ENCODE measurements at regions of chr1 and their contacts with region 1.

Region 1: GRCh38 chr1:40315239-40315794 is 1.8 kb downstream of the COL9A2 start:
- DNase-seq: peak; percentile 71 to 93 (median 83)
- ATAC-seq: peak; percentile 66 to 83 (median 74)
- H3K4me3 ChIP-seq: peak overlapping the region; percentile 52 to 85
- H3K4me3 Mint-ChIP-seq: peak overlapping the region; percentile 81 to 90 (median 83)
- H3K27ac ChIP-seq: no peak overlapping the region
- H3K27ac Mint-ChIP-seq: peak overlapping the region in 1 of 2 donors; percentile 39
- H3K4me1 ChIP-seq: peaks cover 13 to 46% of the 10 kb centered on the region in 2 experiments
- H3K4me1 Mint-ChIP-seq: peaks cover 33 to 54% (median 40%) of the 10 kb centered on the region in 3 donors
- H3K27me3 ChIP-seq: peaks cover 2 to 33% of the 10 kb centered on the region in 2 experiments
- H3K27me3 Mint-ChIP-seq: peaks cover 9 to 10% of the 10 kb centered on the region in 2 donors

Region 2: DNA sequence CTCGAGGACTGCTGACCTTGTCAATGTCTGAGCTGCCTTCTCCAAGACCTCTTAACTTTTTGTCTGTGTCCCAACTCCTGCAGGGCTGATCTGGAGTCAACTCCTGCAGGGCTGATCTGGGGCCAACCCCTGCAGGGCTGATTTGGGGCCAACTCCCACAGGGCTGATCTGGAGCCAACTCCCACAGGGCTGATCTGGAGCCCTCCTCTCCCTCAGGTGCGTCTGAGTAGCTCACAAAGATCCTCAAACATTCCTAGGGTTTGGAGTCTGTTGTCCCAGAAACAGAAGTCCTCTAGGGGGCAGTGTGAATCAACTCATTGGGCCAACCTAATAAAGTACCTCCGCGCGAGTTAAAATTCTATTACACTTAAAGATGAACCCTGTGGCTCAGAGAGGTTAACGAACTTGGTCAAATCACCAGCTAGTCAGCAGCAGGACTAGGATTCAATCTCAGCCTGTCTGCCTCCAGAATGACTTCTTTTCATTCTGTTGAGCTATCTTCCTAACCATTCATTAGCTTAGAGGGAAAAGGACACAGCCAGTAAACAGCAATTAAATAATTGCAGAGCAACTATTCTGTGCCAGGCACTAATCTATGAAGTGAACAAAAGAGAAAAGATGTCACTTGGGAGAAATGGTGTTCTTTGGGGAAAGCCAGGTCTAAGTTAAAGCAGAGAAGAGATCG is 171.3 kb before region 1 on chr1:
- CTCF ChIA-PET with region 1: no interaction called
- POLR2A ChIA-PET with region 1: interaction called in 1 of 2 experiments, 19 read pairs
- DNase-seq: peak in 34 of 35 experiments; percentile 5 to 83 (median 34)
- ATAC-seq: peak; percentile 69 to 90 (median 78)
- H3K4me3 ChIP-seq: no peak overlapping the region
- H3K4me3 Mint-ChIP-seq: no peak overlapping the region
- H3K27ac ChIP-seq: no peak overlapping the region
- H3K27ac Mint-ChIP-seq: no peak overlapping the region
- H3K4me1 ChIP-seq: peaks cover 0 to 4% of the 10 kb centered on the region in 2 experiments
- H3K4me1 Mint-ChIP-seq: peaks cover 6 to 8% (median 7%) of the 10 kb centered on the region in 3 donors
- H3K27me3 ChIP-seq: peaks cover 3% of the 10 kb centered on the region in 2 experiments
- H3K27me3 Mint-ChIP-seq: peaks cover 25 to 33% of the 10 kb centered on the region in 2 donors

Region 3: GRCh38 chr1:40153073-40153770 is 162.1 kb before region 1 on chr1:
- CTCF ChIA-PET with region 1: interaction called, 3 to 18 read pairs
- POLR2A ChIA-PET with region 1: no interaction called
- DNase-seq: peak in 20 of 35 experiments; percentile 9 to 83 (median 24)
- ATAC-seq: peak; percentile 57 to 81 (median 70)
- H3K4me3 ChIP-seq: no peak overlapping the region
- H3K4me3 Mint-ChIP-seq: peak overlapping the region in 2 of 3 donors; percentile 14 to 23
- H3K27ac ChIP-seq: no peak overlapping the region
- H3K27ac Mint-ChIP-seq: peak overlapping the region; percentile 40 to 82
- H3K4me1 ChIP-seq: no peaks in the 10 kb centered on the region
- H3K4me1 Mint-ChIP-seq: peaks cover 5 to 10% (median 6%) of the 10 kb centered on the region in 3 donors
- H3K27me3 ChIP-seq: no peaks in the 10 kb centered on the region
- H3K27me3 Mint-ChIP-seq: peaks cover 4% of the 10 kb centered on the region in 2 donors

Region 4: GRCh38 chr1:40257688-40258444 is 57.5 kb before region 1 on chr1 and contains the start of gene ZMPSTE24:
- CTCF ChIA-PET with region 1: interaction called in 1 of 2 experiments, 18 read pairs
- POLR2A ChIA-PET with region 1: interaction called in 1 of 2 experiments, 10 read pairs
- DNase-seq: peak; percentile 90 to 98 (median 97)
- ATAC-seq: peak; percentile 96 to 97 (median 97)
- H3K4me3 ChIP-seq: peak within 1 kb of the TSS; percentile 94 to 98
- H3K4me3 Mint-ChIP-seq: peak within 1 kb of the TSS; percentile 94 to 99 (median 98)
- H3K27ac ChIP-seq: peak within 1 kb of the TSS; percentile 100
- H3K27ac Mint-ChIP-seq: peak within 1 kb of the TSS; percentile 100
- H3K4me1 ChIP-seq: peaks cover 13 to 20% of the 10 kb centered on the region in 2 experiments
- H3K4me1 Mint-ChIP-seq: peaks cover 35 to 64% (median 59%) of the 10 kb centered on the region in 3 donors
- H3K27me3 ChIP-seq: no peaks in the 10 kb centered on the region
- H3K27me3 Mint-ChIP-seq: no peaks in the 10 kb centered on the region
- total RNA-seq, gene ZMPSTE24: 12.4 to 16.9 (median 15.2) TPM

Region 5: DNA sequence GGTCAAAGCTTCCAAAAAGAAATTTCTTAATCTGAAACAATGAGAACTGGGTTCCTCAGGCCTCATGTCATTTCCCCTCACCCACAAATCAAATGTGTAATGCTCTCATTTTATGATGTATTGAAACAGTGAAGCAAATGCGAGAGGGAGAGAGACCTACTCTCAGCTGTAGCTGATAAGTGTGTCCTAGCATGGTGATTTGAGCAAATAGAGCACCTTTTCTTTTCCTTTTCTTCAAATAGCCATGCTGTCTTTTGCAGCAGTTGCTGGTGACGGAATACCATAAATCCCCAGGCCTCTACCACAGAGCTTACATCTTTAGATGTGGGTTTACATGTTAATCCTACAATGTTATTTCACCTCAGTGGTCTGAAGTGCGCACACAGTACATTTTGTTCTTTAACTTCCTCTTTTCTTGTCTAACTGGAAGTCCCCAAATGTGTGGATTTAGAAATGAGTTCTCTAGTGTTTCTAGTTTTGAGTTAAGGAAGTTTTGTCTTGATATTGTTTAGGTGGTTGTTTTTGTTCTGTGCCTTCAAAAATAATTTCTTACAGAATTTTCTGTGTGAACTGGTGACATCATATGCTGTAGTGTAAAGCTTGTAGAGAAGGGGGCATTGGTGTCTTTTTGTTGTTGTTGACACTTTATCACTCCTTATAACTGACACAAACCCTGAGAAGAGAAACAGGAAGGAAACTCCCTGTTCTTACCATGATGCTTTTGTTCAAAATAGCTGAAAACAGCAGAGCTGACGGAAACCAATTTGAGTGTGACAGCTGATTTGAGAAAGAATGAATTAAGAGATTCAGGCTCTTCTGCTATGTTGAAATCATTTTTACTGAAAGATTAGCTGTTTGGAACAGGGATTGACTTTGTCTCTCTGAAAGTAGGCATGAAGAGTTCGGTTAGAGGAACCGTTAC is 70.4 kb after region 1 on chr1:
- CTCF ChIA-PET with region 1: interaction called, 3 to 11 read pairs
- POLR2A ChIA-PET with region 1: interaction called in 1 of 2 experiments, 6 read pairs
- DNase-seq: peak in 33 of 35 experiments; percentile 31 to 93 (median 70)
- ATAC-seq: peak; percentile 75 to 81 (median 76)
- H3K4me3 ChIP-seq: peak overlapping the region; percentile 30 to 62
- H3K4me3 Mint-ChIP-seq: peak overlapping the region; percentile 79 to 89 (median 86)
- H3K27ac ChIP-seq: peak overlapping the region; percentile 96
- H3K27ac Mint-ChIP-seq: peak overlapping the region; percentile 99 to 100
- H3K4me1 ChIP-seq: peaks cover 84% of the 10 kb centered on the region in 2 experiments
- H3K4me1 Mint-ChIP-seq: peaks cover 88 to 96% (median 95%) of the 10 kb centered on the region in 3 donors
- H3K27me3 ChIP-seq: no peaks in the 10 kb centered on the region
- H3K27me3 Mint-ChIP-seq: no peaks in the 10 kb centered on the region

Region 6: GRCh38 chr1:40397258-40397657 is 81.9 kb after region 1 on chr1:
- CTCF ChIA-PET with region 1: interaction called in 1 of 2 experiments, 11 read pairs
- POLR2A ChIA-PET with region 1: no interaction called
- DNase-seq: no peak
- ATAC-seq: no peak
- H3K4me3 ChIP-seq: no peak overlapping the region
- H3K4me3 Mint-ChIP-seq: peak overlapping the region; percentile 58 to 93 (median 65)
- H3K27ac ChIP-seq: peak overlapping the region; percentile 96
- H3K27ac Mint-ChIP-seq: peak overlapping the region; percentile 92 to 94
- H3K4me1 ChIP-seq: peaks cover 65 to 71% of the 10 kb centered on the region in 2 experiments
- H3K4me1 Mint-ChIP-seq: peaks cover 93 to 95% (median 94%) of the 10 kb centered on the region in 3 donors
- H3K27me3 ChIP-seq: no peaks in the 10 kb centered on the region
- H3K27me3 Mint-ChIP-seq: no peaks in the 10 kb centered on the region

Region 7: GRCh38 chr1:40404670-40405462 is 89.5 kb after region 1 on chr1:
- CTCF ChIA-PET with region 1: interaction called in 1 of 2 experiments, 10 read pairs
- POLR2A ChIA-PET with region 1: interaction called in 1 of 2 experiments, 3 read pairs
- DNase-seq: peak in 21 of 35 experiments; percentile 18 to 87 (median 48)
- ATAC-seq: peak; percentile 62 to 82 (median 70)
- H3K4me3 ChIP-seq: no peak overlapping the region
- H3K4me3 Mint-ChIP-seq: peak overlapping the region; percentile 44 to 57 (median 49)
- H3K27ac ChIP-seq: peak overlapping the region; percentile 87
- H3K27ac Mint-ChIP-seq: peak overlapping the region; percentile 75 to 88
- H3K4me1 ChIP-seq: peaks cover 30 to 44% of the 10 kb centered on the region in 2 experiments
- H3K4me1 Mint-ChIP-seq: peaks cover 76 to 82% (median 79%) of the 10 kb centered on the region in 3 donors
- H3K27me3 ChIP-seq: no peaks in the 10 kb centered on the region
- H3K27me3 Mint-ChIP-seq: no peaks in the 10 kb centered on the region

Measured in T-cell (primary cell).